Panc1 (cell line): ENCODE measurements at regions of chr5 and their contacts with region 1.

Region 1: DNA sequence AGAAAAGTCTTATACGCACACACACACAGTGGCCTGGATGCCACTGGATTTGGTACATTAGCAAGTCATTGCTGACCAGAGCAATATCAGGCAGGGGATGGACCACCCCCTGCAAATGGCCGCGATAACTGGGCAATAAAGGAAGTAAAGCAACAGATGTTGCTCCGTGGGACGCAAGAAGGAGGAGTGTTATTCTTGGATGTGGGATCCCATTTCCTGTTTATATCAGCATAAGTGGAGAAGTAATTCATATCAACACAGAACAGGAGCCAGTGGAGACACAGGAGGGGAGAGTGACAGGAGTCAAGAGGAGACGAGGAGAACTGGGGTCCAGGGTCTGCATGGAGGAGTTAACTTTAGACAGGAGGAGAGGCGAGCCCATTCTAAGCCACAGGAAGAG is 18.4 kb downstream of the RUFY1 start:
- DNase-seq: no peak
- ATAC-seq: no peak
- H3K4me3 ChIP-seq: no peak overlapping the region
- H3K27ac ChIP-seq: no peak overlapping the region
- H3K4me1 ChIP-seq: no peaks in the 10 kb centered on the region
- H3K27me3 ChIP-seq: no peaks in the 10 kb centered on the region
- CTCF ChIP-seq: no peak

Region 2: GRCh38 chr5:179553873-179554272 is 14.8 kb before region 1 on chr5:
- CTCF ChIA-PET with region 1: no interaction called
- POLR2A ChIA-PET with region 1: no interaction called
- in situ Hi-C with region 1: no loop called
- intact Hi-C with region 1: no loop called
- DNase-seq: no peak
- ATAC-seq: no peak
- H3K4me3 ChIP-seq: no peak overlapping the region
- H3K27ac ChIP-seq: no peak overlapping the region
- H3K4me1 ChIP-seq: peaks cover 20% of the 10 kb centered on the region
- H3K27me3 ChIP-seq: no peaks in the 10 kb centered on the region
- CTCF ChIP-seq: no peak

Region 3: GRCh38 chr5:179680014-179680779 is 111.5 kb after region 1 on chr5:
- CTCF ChIA-PET with region 1: no interaction called
- POLR2A ChIA-PET with region 1: interaction called, 11 read pairs
- in situ Hi-C with region 1: no loop called
- intact Hi-C with region 1: no loop called
- DNase-seq: no peak
- ATAC-seq: no peak
- H3K4me3 ChIP-seq: no peak overlapping the region
- H3K27ac ChIP-seq: no peak overlapping the region
- H3K4me1 ChIP-seq: no peaks in the 10 kb centered on the region; the same call in 1 of the 2 replicates
- H3K27me3 ChIP-seq: no peaks in the 10 kb centered on the region
- CTCF ChIP-seq: no peak